ENCODE measurements at regions of chr14 and their contacts with region 1.

Region 1: DNA sequence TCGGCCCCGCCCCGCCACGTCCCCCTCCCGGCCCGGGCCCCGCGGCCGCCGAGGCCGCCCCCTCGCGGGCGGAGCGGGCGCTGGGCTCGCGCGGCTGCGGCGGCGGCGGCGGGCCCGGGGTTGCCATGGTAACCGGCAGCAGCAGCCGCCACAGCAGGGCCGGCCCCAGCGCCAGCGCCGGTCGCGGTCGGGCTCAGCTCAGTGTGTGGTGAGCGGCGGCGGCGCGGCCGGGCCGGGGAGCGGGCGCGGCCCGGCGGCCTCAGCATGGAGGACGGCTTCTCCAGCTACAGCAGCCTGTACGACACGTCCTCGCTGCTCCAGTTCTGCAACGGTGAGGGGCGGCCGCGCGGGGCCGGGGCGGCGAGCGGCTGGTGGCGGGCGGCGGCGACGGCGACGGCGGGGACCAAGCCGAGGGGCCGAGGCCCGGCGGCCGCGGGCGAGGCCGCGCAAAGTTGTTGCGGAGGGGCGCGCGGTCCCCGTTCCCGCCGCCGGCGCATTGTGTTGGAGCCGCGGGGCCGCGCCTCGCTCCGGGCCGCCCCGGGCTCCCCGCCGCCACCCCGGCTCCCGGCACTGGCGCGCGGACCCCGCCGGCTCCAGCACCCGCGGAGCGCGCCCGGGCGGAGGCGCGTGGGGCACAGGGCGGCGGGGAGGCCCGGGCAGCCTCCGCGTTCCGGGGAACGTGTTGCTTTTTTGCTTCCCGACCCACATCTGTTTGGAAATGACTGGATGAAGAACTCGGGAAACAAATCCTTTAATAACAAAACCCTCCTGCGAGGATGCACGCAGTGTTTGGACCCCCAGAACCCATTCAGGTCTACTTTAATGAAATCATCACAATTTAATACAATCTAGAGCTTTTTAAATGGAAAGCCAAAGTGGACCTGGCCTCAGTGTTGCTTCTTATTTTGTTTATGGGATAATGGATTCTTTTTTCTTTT is at the start of gene EML1:
- DNase-seq: peak; percentile 81 to 91
- H3K4me3 ChIP-seq: peak within 1 kb of the TSS; percentile 65 to 69
- H3K27ac ChIP-seq: peak within 1 kb of the TSS; percentile 82 to 92
- H3K4me1 ChIP-seq: peaks cover 0 to 24% (median 13%) of the 10 kb centered on the region in 4 donors
- H3K27me3 ChIP-seq: no peaks in the 10 kb centered on the region
- CTCF ChIP-seq: peak in 1 of 2 experiments; percentile 36

Region 2: DNA sequence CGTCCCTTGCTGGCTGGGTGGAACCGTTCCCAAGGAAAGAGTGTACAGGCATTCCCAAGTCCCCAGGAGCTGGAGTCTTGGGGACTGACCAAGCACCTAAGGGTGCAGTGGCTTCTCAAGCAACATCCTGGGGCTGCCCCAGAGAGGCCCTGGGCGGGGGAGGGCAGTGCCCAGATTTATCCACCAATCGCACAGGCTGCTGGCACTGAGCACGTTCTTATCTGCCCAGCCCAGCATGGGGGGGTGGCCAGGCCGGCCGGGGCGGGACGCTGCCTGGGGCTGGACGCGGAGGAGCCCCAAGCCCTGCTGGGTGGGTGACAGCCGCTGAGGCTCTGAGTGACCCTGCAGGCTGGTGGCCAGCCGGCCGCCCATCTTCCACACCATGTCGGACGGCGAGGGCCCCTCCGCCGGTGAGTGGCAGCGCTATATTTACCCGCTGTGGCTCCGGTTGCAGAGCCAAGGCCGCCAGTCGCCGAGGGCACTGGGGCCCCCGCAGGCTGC is 56.0 kb before region 1 on chr14:
- intact Hi-C with region 1: loop called (anchors 5 kb)
- DNase-seq: peak; percentile 76 to 89
- H3K4me3 ChIP-seq: peak overlapping the region; percentile 59 to 63
- H3K27ac ChIP-seq: peak overlapping the region; percentile 53 to 71
- H3K4me1 ChIP-seq: peaks cover 0 to 37% (median 23%) of the 10 kb centered on the region in 4 donors
- H3K27me3 ChIP-seq: no peaks in the 10 kb centered on the region
- CTCF ChIP-seq: no peak

Region 3: DNA sequence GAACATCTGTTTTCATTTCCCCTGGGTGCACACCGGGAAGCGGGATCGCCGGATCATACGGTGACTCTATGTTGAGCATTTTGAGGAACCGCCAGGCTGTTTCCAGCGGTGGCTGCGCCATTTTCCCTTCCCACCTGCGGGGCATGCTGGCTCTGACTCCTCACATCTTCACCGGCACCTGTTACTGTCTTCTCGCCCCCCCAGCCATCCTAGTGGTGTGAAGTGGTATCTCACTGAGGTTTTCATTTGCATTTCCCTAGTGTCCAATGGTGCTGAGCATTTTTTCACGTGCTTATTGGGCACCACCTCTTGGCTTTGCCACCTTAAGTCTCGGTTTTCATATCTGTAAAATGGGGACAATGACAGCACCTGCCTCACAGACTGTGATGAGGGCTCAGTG is 44.3 kb before region 1 on chr14:
- intact Hi-C with region 1: no loop called
- DNase-seq: no peak
- H3K4me3 ChIP-seq: no peak overlapping the region
- H3K27ac ChIP-seq: no peak overlapping the region
- H3K4me1 ChIP-seq: peaks cover 0 to 64% (median 41%) of the 10 kb centered on the region in 4 donors
- H3K27me3 ChIP-seq: no peaks in the 10 kb centered on the region
- CTCF ChIP-seq: no peak

Measured in tibial artery (tissue), 4 donors.